OCI-LY7 (cell line): ENCODE measurements at regions of chr16 and their contacts with region 1.

Region 1: DNA sequence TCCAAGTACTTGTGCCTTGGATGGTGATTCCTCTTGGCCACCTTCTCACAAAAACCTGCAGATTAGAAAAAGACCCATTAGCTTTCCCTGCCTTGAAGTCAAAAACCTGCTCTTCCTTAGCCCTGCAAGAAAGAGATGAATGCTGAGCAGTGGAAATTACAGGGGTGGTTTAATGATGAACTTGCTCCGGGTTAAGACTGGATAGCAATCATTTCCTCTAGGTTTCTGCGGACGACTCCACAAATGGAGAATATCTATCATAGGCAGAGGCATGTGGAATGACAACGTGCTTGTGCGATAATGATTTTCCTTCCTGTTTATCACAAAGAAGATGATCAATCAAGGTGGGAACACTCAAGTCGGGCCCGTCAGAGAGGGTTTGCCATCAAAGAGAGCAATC is 201.2 kb upstream of the ERCC4 start:
- DNase-seq: no peak
- H3K4me3 ChIP-seq: no peak overlapping the region
- H3K27ac ChIP-seq: no peak overlapping the region
- H3K4me1 ChIP-seq: no peaks in the 10 kb centered on the region
- CTCF ChIP-seq: no peak

Region 2: GRCh38 chr16:13540771-13541170 is 178.0 kb before region 1 on chr16:
- CTCF ChIA-PET with region 1: no interaction called
- POLR2A ChIA-PET with region 1: no interaction called
- intact Hi-C with region 1: no loop called
- DNase-seq: no peak
- H3K4me3 ChIP-seq: no peak overlapping the region
- H3K27ac ChIP-seq: no peak overlapping the region
- H3K4me1 ChIP-seq: no peaks in the 10 kb centered on the region
- CTCF ChIP-seq: no peak

Region 3: GRCh38 chr16:13742928-13743327 is 24.2 kb after region 1 on chr16:
- CTCF ChIA-PET with region 1: no interaction called
- POLR2A ChIA-PET with region 1: no interaction called
- intact Hi-C with region 1: loop called (anchors 2 kb)
- DNase-seq: no peak
- H3K4me3 ChIP-seq: no peak overlapping the region
- H3K27ac ChIP-seq: no peak overlapping the region
- H3K4me1 ChIP-seq: no peaks in the 10 kb centered on the region
- CTCF ChIP-seq: no peak